Heart right ventricle (tissue), 16 donors: ENCODE measurements at regions of chr5 and their contacts with region 1.

Region 1: GRCh38 chr5:137808503-137809205 is 54.5 kb upstream of the HNRNPA0 start:
- DNase-seq: peak; percentile 23 to 35
- ATAC-seq: peak in 6 of 8 donors; percentile 50 to 81 (median 68)
- H3K4me3 ChIP-seq: no peak overlapping the region
- H3K27ac ChIP-seq: peak overlapping the region in 3 of 10 donors; percentile 18 to 51 (median 44)
- H3K4me1 ChIP-seq: peaks cover 0 to 35% (median 0%) of the 10 kb centered on the region in 9 donors
- H3K27me3 ChIP-seq: no peaks in the 10 kb centered on the region
- CTCF ChIP-seq: no peak

Region 2: DNA sequence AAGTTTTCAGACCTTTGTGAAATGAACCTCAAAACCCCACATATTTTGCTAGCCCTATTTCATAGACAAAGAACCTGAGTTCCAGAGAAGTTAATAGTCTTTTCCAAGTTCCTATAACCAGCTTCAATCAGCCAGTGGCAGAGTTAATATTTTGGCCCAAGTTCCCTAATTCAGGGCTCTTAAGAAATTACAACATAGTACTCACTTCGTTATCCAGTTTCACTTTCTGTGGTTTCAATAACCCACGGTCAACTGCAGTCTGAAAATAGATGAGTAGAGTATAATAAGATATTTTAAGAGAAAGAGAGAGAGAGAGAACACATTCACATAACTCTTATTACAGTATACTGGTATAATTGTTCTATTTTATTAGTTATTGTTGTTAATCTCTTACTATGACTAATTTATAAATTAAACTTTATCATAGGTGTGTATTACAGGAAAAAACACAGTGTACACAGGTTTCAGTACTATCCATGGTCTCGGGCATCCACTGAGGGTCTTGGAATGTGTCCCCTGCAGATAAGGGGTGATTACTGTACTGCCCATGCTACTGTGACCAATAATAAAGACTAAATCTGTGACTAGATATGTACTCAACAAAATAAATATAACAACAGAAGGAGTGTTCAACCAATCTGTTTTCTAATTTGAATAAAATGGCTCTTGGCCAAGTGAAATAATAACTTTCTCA is 49.7 kb after region 1 on chr5:
- intact Hi-C with region 1: loop called in 1 of 10 experiments (anchors 1 kb)
- DNase-seq: no peak
- ATAC-seq: peak; percentile 67 to 89 (median 82)
- H3K4me3 ChIP-seq: peak overlapping the region in 9 of 10 donors; percentile 3 to 49 (median 31)
- H3K27ac ChIP-seq: peak overlapping the region; percentile 34 to 89 (median 76)
- H3K4me1 ChIP-seq: peaks cover 0 to 37% (median 33%) of the 10 kb centered on the region in 9 donors
- H3K27me3 ChIP-seq: no peaks in the 10 kb centered on the region
- CTCF ChIP-seq: no peak

Region 3: GRCh38 chr5:138054847-138055558 is 246.3 kb after region 1 on chr5:
- intact Hi-C with region 1: no loop called
- DNase-seq: no peak
- ATAC-seq: peak in 1 of 8 donors; percentile 20
- H3K4me3 ChIP-seq: peak overlapping the region in 1 of 10 donors; percentile 17
- H3K27ac ChIP-seq: no peak overlapping the region
- H3K4me1 ChIP-seq: peaks cover 0 to 9% (median 0%) of the 10 kb centered on the region in 9 donors
- H3K27me3 ChIP-seq: peaks cover 0 to 9% (median 0%) of the 10 kb centered on the region in 7 donors
- CTCF ChIP-seq: no peak